HEK293 (cell line): ENCODE measurements at regions of chr9 and their contacts with region 1.

Region 1: DNA sequence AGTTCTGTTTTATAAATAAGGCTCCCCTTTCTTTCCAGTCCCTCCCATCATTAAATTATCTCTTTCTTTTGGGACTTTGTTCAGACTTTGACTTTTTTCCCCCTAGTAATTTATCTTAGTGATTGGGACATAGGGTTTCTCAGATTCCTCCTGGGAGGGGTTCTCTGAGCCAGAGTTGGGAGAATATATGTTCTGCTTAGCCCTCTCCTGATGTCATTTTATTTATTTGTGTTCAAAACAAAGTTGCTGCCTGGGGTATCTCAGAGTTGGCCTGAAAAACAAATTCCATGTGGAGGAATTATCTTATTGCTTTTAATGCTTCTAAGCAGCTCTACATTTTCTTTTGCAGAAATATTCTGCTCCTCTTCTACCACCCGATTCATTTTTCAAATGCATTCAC is 211.0 kb downstream of the PCSK5 start:
- H3K4me3 ChIP-seq: no peak overlapping the region
- H3K27ac ChIP-seq: no peak overlapping the region
- H3K4me1 ChIP-seq: no peaks in the 10 kb centered on the region
- CTCF ChIP-seq: no peak

Region 2: GRCh38 chr9:76086539-76086938 is 15.0 kb before region 1 on chr9:
- CTCF ChIA-PET with region 1: no interaction called
- POLR2A ChIA-PET with region 1: no interaction called
- H3K4me3 ChIP-seq: no peak overlapping the region
- H3K27ac ChIP-seq: no peak overlapping the region
- H3K4me1 ChIP-seq: no peaks in the 10 kb centered on the region
- CTCF ChIP-seq: no peak

Region 3: DNA sequence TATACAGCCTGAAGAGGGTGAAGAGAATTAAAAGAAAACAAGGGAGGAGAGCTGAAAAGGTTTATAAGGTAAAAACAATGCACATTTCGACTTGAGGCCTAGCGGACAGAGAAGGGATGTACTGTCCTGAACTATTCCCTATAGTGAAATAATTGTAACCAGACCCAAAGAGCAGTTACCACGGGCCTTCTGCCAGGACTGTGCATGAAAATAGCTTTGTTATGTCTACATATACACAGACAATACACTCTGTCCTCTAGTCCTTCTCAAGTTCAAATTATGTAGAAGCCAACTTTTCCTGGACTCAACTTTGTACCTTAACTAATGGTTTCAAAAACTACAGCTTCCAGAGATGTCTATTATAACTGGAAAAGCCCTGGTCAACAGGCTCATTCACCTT is 12.7 kb after region 1 on chr9:
- CTCF ChIA-PET with region 1: no interaction called
- POLR2A ChIA-PET with region 1: no interaction called
- H3K4me3 ChIP-seq: no peak overlapping the region
- H3K27ac ChIP-seq: no peak overlapping the region
- H3K4me1 ChIP-seq: no peaks in the 10 kb centered on the region
- CTCF ChIP-seq: no peak

Region 4: GRCh38 chr9:76321205-76321828 is 219.8 kb after region 1 on chr9:
- CTCF ChIA-PET with region 1: no interaction called
- POLR2A ChIA-PET with region 1: interaction called, 10 read pairs
- H3K4me3 ChIP-seq: no peak overlapping the region
- H3K27ac ChIP-seq: no peak overlapping the region
- H3K4me1 ChIP-seq: no peaks in the 10 kb centered on the region
- CTCF ChIP-seq: no peak